Panc1 (cell line): ENCODE measurements at regions of chr7 and their contacts with region 1.

Region 1: GRCh38 chr7:38335492-38336147 is 62.2 kb upstream of the TARP start:
- DNase-seq: peak; percentile 82
- ATAC-seq: peak; percentile 99
- H3K4me3 ChIP-seq: no peak overlapping the region
- H3K27ac ChIP-seq: no peak overlapping the region
- H3K4me1 ChIP-seq: no peaks in the 10 kb centered on the region
- H3K27me3 ChIP-seq: no peaks in the 10 kb centered on the region
- CTCF ChIP-seq: peak; percentile 99

Region 2: DNA sequence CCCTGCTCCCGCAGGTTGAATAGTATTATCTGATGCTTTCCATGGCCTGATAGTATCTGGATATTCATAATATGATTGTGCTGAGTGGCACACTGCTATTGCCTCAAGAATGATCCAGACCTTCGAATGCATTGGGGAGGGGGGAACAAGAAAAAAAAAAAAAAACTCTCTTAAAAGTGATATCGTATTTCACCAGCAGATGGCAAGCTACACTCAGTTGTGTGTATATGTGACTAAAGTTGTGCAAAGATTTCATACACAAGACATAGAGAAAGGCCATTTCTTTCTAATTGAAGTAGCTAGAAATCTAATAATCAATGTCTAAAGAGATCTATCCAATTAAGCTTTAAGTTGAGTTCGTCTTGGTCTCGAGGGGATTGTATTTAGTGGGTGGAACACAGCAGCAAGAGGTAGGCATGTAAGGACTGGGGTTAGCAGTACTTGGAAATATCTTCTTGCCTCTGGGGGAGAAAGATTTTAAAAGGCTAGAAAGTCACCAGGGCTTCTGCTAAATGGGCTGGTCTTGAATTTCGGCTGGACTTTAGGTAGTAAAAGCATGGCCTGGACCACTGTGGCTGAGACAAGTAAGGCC is 434.3 kb before region 1 on chr7:
- CTCF ChIA-PET with region 1: interaction called, 4 read pairs
- POLR2A ChIA-PET with region 1: no interaction called
- in situ Hi-C with region 1: no loop called
- intact Hi-C with region 1: loop called (anchors 10 kb)
- DNase-seq: peak; percentile 28
- ATAC-seq: peak; percentile 62
- H3K4me3 ChIP-seq: no peak overlapping the region
- H3K27ac ChIP-seq: no peak overlapping the region
- H3K4me1 ChIP-seq: no peaks in the 10 kb centered on the region; the same call in 1 of the 2 replicates
- H3K27me3 ChIP-seq: peaks cover 4% of the 10 kb centered on the region; the same call in 1 of the 2 replicates
- CTCF ChIP-seq: peak; percentile 77; the same call in 1 of the 2 replicates

Region 3: GRCh38 chr7:38215735-38216670 is 119.6 kb before region 1 on chr7:
- CTCF ChIA-PET with region 1: interaction called, 14 read pairs
- POLR2A ChIA-PET with region 1: no interaction called
- in situ Hi-C with region 1: no loop called
- intact Hi-C with region 1: no loop called
- DNase-seq: peak; percentile 48
- ATAC-seq: peak; percentile 98
- H3K4me3 ChIP-seq: no peak overlapping the region
- H3K27ac ChIP-seq: no peak overlapping the region
- H3K4me1 ChIP-seq: no peaks in the 10 kb centered on the region
- H3K27me3 ChIP-seq: no peaks in the 10 kb centered on the region
- CTCF ChIP-seq: peak; percentile 99

Region 4: DNA sequence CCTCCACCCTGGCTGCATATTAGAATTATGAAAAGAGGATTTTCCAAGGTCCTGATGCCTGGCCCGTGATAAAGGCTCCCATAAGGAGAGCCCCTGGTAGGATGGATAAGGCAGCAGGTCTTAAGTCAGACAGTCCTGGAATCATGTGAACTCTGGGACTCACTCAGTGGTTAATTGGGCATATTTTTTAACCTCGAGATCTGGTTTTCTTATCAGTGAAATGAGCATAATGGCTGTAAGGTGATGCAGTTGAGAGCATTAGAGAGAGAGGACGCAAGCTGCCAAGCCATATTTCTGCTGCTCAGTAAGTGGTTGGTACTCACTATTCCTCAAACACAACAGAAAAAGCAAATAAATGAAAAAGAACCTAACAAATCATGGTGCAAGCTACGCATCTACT is 100.0 kb before region 1 on chr7:
- CTCF ChIA-PET with region 1: interaction called, 13 read pairs
- POLR2A ChIA-PET with region 1: no interaction called
- in situ Hi-C with region 1: no loop called
- intact Hi-C with region 1: no loop called
- DNase-seq: no peak
- ATAC-seq: no peak
- H3K4me3 ChIP-seq: no peak overlapping the region
- H3K27ac ChIP-seq: no peak overlapping the region
- H3K4me1 ChIP-seq: no peaks in the 10 kb centered on the region
- H3K27me3 ChIP-seq: no peaks in the 10 kb centered on the region
- CTCF ChIP-seq: no peak

Region 5: DNA sequence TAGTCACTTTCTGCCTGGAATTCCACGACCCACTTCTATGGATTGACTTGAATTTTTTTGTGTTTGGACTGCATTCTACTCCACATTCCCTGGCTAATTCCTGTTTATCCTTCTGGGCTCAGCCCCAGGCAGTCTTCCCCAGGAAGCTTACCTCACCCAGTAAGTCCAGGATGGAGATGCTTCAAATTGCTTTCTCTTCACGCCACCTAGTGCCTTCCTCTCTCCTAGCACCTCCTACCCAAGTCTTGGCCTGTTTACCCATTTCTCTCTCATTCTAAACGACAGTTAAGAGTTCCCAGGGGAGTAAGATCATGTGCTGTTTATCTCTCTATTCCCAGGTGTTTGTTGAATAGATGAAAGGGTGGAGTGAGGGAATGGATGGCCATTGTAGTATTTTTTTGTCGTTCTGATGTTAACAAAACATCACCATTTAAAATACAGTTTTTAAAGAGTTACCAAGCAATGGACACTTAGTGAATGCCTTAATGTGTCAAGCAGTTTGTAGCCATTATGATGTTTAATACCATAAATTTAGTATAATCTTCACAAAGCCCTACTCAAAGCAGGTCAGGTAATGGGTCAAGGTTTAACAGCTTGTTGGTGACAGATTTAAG is 16.7 kb before region 1 on chr7:
- CTCF ChIA-PET with region 1: interaction called, 11 read pairs
- POLR2A ChIA-PET with region 1: interaction called, 4 read pairs
- in situ Hi-C with region 1: no loop called
- intact Hi-C with region 1: no loop called
- DNase-seq: peak; percentile 70
- ATAC-seq: peak; percentile 95
- H3K4me3 ChIP-seq: no peak overlapping the region
- H3K27ac ChIP-seq: no peak overlapping the region
- H3K4me1 ChIP-seq: no peaks in the 10 kb centered on the region
- H3K27me3 ChIP-seq: no peaks in the 10 kb centered on the region; the same call in none of the 2 replicates
- CTCF ChIP-seq: peak; percentile 86

Region 6: DNA sequence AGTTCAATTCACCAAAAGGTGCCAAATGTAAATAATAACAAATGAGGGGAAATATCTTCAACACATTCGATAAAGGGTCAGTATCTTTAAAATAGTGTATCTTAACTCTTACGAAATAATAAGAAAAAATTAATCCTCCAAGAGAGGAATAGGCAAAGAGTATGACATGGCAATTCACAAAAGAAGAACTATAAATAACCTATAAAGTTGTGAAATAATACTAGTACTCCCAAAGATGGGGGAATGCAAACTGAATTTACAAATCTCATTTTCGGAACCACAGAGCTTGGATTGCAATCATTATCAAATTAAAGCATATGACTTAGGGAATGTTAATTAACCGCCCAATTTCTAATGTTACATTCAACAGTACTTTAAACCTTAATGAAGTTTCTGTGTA is 16.0 kb after region 1 on chr7:
- CTCF ChIA-PET with region 1: interaction called, 14 read pairs
- POLR2A ChIA-PET with region 1: no interaction called
- in situ Hi-C with region 1: no loop called
- intact Hi-C with region 1: no loop called
- DNase-seq: no peak
- ATAC-seq: no peak
- H3K4me3 ChIP-seq: no peak overlapping the region
- H3K27ac ChIP-seq: no peak overlapping the region
- H3K4me1 ChIP-seq: no peaks in the 10 kb centered on the region
- H3K27me3 ChIP-seq: no peaks in the 10 kb centered on the region
- CTCF ChIP-seq: no peak

Region 7: GRCh38 chr7:38375453-38375852 is 39.8 kb after region 1 on chr7:
- CTCF ChIA-PET with region 1: no interaction called
- POLR2A ChIA-PET with region 1: no interaction called
- in situ Hi-C with region 1: no loop called
- intact Hi-C with region 1: no loop called
- DNase-seq: no peak
- ATAC-seq: no peak
- H3K4me3 ChIP-seq: no peak overlapping the region
- H3K27ac ChIP-seq: no peak overlapping the region
- H3K4me1 ChIP-seq: no peaks in the 10 kb centered on the region
- H3K27me3 ChIP-seq: peaks cover 7% of the 10 kb centered on the region; the same call in 1 of the 2 replicates
- CTCF ChIP-seq: no peak

Region 8: DNA sequence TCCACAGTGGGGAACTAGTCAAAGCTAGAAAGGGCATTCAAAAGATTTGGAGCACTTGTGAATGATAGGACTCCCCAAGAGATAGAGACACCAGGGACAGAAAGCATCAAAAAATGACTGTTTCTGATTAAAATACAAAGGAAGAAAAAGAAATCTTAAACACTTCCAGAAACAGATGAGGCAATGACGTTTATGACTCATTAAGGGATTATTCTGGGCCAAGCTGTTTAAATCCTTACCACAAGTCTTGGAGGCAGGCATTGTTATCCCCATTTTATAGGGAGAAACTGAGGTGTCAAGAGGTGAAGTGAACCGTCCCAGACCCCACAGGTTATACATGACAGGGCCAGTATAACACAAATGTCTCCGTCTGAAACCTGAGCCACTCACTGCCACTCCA is 363.9 kb after region 1 on chr7:
- CTCF ChIA-PET with region 1: no interaction called
- POLR2A ChIA-PET with region 1: no interaction called
- in situ Hi-C with region 1: no loop called
- intact Hi-C with region 1: no loop called
- DNase-seq: no peak
- ATAC-seq: no peak
- H3K4me3 ChIP-seq: no peak overlapping the region
- H3K27ac ChIP-seq: no peak overlapping the region
- H3K4me1 ChIP-seq: no peaks in the 10 kb centered on the region
- H3K27me3 ChIP-seq: 0 out of 2 replicates have a peak, but pooled peaks cover 2% of the 10 kb centered on the region
- CTCF ChIP-seq: no peak